Naive thymus-derived CD4-positive, alpha-beta T cell (primary cell): ENCODE measurements at regions of chr12 and their contacts with region 1.

Region 1: GRCh38 chr12:47361389-47362021 is 281.7 kb upstream of the AMIGO2 start:
- DNase-seq: peak in 8 of 9 donors; percentile 10 to 50 (median 32)
- ATAC-seq: peak; percentile 68
- H3K4me3 ChIP-seq: peak overlapping the region; percentile 48
- H3K4me3 Mint-ChIP-seq: peak overlapping the region; percentile 78 to 88 (median 84)
- H3K27ac ChIP-seq: peak overlapping the region; percentile 80
- H3K27ac Mint-ChIP-seq: peak overlapping the region in 8 of 9 donors; percentile 96 to 100 (median 98)
- H3K4me1 ChIP-seq: peaks cover 56 to 67% of the 10 kb centered on the region in 2 donors
- H3K4me1 Mint-ChIP-seq: peaks cover 52 to 68% (median 59%) of the 10 kb centered on the region in 7 donors
- H3K27me3 ChIP-seq: no peaks in the 10 kb centered on the region
- H3K27me3 Mint-ChIP-seq: no peaks in the 10 kb centered on the region

Region 2: DNA sequence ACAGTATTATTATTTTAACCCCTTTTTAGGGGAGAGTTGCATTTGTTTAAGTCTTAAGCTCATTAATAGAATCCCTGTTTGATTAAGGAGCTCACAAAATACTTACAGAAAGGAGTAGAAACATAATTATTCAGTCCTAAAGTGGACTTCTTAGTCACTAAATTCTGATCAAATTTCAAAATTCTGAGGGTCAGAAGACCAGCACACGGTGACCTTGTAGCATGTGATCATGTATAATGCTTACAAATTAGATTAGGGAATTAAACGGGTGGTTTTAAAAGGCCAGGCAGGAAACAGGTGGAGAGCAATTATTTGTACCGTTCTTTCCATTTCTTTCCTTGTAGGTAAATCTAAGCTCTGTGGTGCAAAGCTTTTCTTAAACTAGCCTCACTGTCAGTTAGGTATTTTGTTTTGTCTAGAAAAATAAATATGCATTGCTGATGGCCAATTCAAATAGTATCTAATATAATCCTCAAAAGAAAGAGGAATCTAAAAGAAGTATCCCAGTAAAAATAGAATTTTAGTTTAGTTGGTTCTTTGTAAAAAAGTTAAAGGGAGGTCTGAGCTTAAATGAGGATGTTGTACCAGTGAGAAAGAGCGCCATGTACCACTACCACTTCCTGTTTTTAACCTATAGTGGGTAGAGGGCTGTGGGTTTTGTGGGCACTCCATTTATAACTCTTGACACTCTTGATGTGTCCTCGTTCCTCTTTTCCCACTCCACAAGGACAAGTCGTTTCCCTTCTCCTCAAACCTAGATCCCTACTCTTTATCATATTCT is 1143.8 kb before region 1 on chr12:
- CTCF ChIA-PET with region 1: no interaction called
- POLR2A ChIA-PET with region 1: no interaction called
- intact Hi-C with region 1: loop called in 1 of 2 experiments (anchors 2 kb)
- DNase-seq: peak in 8 of 9 donors; percentile 58 to 87 (median 84)
- ATAC-seq: peak; percentile 54
- H3K4me3 ChIP-seq: peak overlapping the region; percentile 41
- H3K4me3 Mint-ChIP-seq: peak overlapping the region; percentile 74 to 89 (median 81)
- H3K27ac ChIP-seq: peak overlapping the region; percentile 78
- H3K27ac Mint-ChIP-seq: peak overlapping the region; percentile 89 to 100 (median 99)
- H3K4me1 ChIP-seq: peaks cover 95% of the 10 kb centered on the region in 2 donors
- H3K4me1 Mint-ChIP-seq: peaks cover 69 to 100% (median 98%) of the 10 kb centered on the region in 7 donors
- H3K27me3 ChIP-seq: no peaks in the 10 kb centered on the region
- H3K27me3 Mint-ChIP-seq: no peaks in the 10 kb centered on the region

Region 3: GRCh38 chr12:46659824-46660223 is 701.7 kb before region 1 on chr12:
- CTCF ChIA-PET with region 1: no interaction called
- POLR2A ChIA-PET with region 1: no interaction called
- intact Hi-C with region 1: no loop called
- DNase-seq: no peak
- ATAC-seq: no peak
- H3K4me3 ChIP-seq: no peak overlapping the region
- H3K4me3 Mint-ChIP-seq: peak overlapping the region in 5 of 10 donors; percentile 8 to 66 (median 15)
- H3K27ac ChIP-seq: no peak overlapping the region
- H3K27ac Mint-ChIP-seq: peak overlapping the region in 7 of 9 donors; percentile 7 to 92 (median 40)
- H3K4me1 ChIP-seq: peaks cover 0 to 9% of the 10 kb centered on the region in 2 donors
- H3K4me1 Mint-ChIP-seq: peaks cover 11 to 44% (median 28%) of the 10 kb centered on the region in 7 donors
- H3K27me3 ChIP-seq: no peaks in the 10 kb centered on the region
- H3K27me3 Mint-ChIP-seq: no peaks in the 10 kb centered on the region

Region 4: GRCh38 chr12:47079468-47079980 is 282.0 kb before region 1 on chr12 and contains the starts of genes AMIGO2 and PCED1B:
- CTCF ChIA-PET with region 1: no interaction called
- POLR2A ChIA-PET with region 1: interaction called, 6 read pairs
- intact Hi-C with region 1: loop called in 1 of 2 experiments (anchors 1 kb)
- DNase-seq: peak; percentile 31 to 72 (median 51)
- ATAC-seq: peak; percentile 71
- H3K4me3 ChIP-seq: peak within 1 kb of the TSS; percentile 84
- H3K4me3 Mint-ChIP-seq: peak within 1 kb of the TSS; percentile 91 to 100 (median 96)
- H3K27ac ChIP-seq: peak within 1 kb of the TSS; percentile 80
- H3K27ac Mint-ChIP-seq: peak within 1 kb of the TSS; percentile 87 to 99 (median 96)
- H3K4me1 ChIP-seq: peaks cover 39 to 45% of the 10 kb centered on the region in 2 donors
- H3K4me1 Mint-ChIP-seq: peaks cover 44 to 83% (median 74%) of the 10 kb centered on the region in 7 donors
- H3K27me3 ChIP-seq: no peaks in the 10 kb centered on the region
- H3K27me3 Mint-ChIP-seq: no peaks in the 10 kb centered on the region
- total RNA-seq, gene AMIGO2: 6.8 to 13.5 (median 12.8) TPM
- total RNA-seq, gene PCED1B: 41.4 to 98.3 (median 70.0) TPM

Region 5: DNA sequence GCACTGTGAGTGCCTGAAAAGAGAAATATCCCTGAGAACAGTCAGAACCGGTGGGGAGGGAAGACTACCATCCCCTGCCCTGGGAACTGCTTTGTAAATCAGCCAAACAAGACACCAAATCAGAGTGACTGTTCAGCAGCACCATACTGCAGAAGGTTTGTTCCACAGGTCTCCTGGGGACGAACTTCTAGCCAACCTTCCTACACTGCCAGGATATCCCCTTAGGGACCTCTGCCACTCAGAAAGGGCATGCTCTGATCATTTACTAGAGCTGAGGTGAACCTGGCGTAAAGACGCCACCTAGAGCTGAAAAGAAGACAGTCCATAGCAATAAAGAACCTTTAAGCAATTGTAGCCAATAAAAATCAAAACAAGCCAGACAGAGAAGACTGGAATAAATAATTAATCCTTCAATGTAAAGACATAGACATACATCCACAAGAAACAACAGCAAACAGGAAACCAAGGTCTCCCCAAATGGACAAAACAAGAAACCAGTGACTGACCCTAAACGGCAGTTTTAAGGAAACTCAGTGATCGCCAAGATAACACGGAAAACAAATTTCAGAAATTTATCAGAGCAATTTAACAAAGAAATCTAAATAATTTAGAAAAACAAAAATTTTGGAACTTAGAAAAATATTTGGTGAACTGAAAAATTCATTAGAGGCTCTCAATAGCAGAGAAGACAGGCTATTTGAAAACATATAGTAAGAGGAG is 53.7 kb before region 1 on chr12:
- CTCF ChIA-PET with region 1: interaction called, 4 read pairs
- POLR2A ChIA-PET with region 1: interaction called, 8 read pairs
- intact Hi-C with region 1: loop called (anchors 1 to 2 kb)
- DNase-seq: peak in 8 of 9 donors; percentile 39 to 76 (median 62)
- ATAC-seq: peak; percentile 96
- H3K4me3 ChIP-seq: peak overlapping the region; percentile 56
- H3K4me3 Mint-ChIP-seq: peak overlapping the region; percentile 91 to 98 (median 94)
- H3K27ac ChIP-seq: peak overlapping the region; percentile 69
- H3K27ac Mint-ChIP-seq: peak overlapping the region; percentile 89 to 97 (median 95)
- H3K4me1 ChIP-seq: peaks cover 0 to 3% of the 10 kb centered on the region in 2 donors
- H3K4me1 Mint-ChIP-seq: peaks cover 27 to 61% (median 51%) of the 10 kb centered on the region in 7 donors
- H3K27me3 ChIP-seq: no peaks in the 10 kb centered on the region
- H3K27me3 Mint-ChIP-seq: no peaks in the 10 kb centered on the region

Region 6: GRCh38 chr12:47377414-47378221 is 16.1 kb after region 1 on chr12:
- CTCF ChIA-PET with region 1: no interaction called
- POLR2A ChIA-PET with region 1: interaction called, 5 read pairs
- intact Hi-C with region 1: loop called (anchors 1 to 2 kb)
- DNase-seq: no peak
- ATAC-seq: no peak
- H3K4me3 ChIP-seq: no peak overlapping the region
- H3K4me3 Mint-ChIP-seq: peak overlapping the region in 3 of 10 donors; percentile 4 to 28 (median 8)
- H3K27ac ChIP-seq: no peak overlapping the region
- H3K27ac Mint-ChIP-seq: peak overlapping the region in 6 of 9 donors; percentile 24 to 81 (median 58)
- H3K4me1 ChIP-seq: peaks cover 1 to 7% of the 10 kb centered on the region in 2 donors
- H3K4me1 Mint-ChIP-seq: peaks cover 16 to 57% (median 38%) of the 10 kb centered on the region in 7 donors
- H3K27me3 ChIP-seq: no peaks in the 10 kb centered on the region
- H3K27me3 Mint-ChIP-seq: no peaks in the 10 kb centered on the region

Region 7: DNA sequence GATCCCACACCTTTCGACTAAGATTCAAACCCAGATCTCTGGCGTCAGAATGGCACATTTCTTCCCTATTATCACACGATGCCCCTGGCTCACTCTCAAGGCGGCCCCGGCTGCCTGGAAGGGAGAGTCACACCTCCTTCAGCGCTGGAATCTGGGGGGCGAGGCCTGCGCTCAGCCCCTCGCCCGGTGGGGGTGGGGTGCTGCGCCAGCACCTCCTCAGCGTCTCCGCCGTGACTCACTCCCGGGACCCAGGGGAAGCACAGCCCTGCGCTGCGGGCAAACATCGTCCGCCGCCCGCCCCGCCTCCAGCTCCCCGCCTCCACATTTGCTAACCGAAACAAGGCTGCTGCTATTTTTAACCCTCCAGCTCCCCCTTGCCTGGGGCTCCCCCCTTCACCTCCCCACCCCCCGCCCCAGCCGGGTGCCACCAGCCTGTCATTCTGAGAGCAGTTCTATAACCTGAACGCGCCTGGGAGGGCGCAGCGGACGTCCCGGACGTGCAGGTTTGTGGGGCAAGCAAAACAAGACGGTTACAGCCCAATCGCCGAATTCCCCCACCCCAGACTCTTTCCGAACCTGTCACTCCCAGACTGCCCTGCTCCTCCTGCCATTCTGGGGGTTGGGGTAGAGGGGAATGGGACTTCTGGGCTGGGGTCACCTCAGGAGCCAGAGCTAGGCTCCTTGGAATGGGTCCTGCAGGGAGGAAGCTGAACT is 451.4 kb after region 1 on chr12:
- CTCF ChIA-PET with region 1: no interaction called
- POLR2A ChIA-PET with region 1: no interaction called
- intact Hi-C with region 1: loop called in 1 of 2 experiments (anchors 10 kb)
- DNase-seq: peak; percentile 61 to 95 (median 85)
- ATAC-seq: peak; percentile 84
- H3K4me3 ChIP-seq: peak overlapping the region; percentile 80
- H3K4me3 Mint-ChIP-seq: peak overlapping the region; percentile 83 to 96 (median 88)
- H3K27ac ChIP-seq: peak overlapping the region; percentile 88
- H3K27ac Mint-ChIP-seq: peak overlapping the region; percentile 92 to 99 (median 97)
- H3K4me1 ChIP-seq: peaks cover 85 to 87% of the 10 kb centered on the region in 2 donors
- H3K4me1 Mint-ChIP-seq: peaks cover 77 to 100% (median 90%) of the 10 kb centered on the region in 7 donors
- H3K27me3 ChIP-seq: no peaks in the 10 kb centered on the region
- H3K27me3 Mint-ChIP-seq: no peaks in the 10 kb centered on the region